AG04450 (cell line): ENCODE measurements at regions of chr4 and their contacts with region 1.

Region 1: DNA sequence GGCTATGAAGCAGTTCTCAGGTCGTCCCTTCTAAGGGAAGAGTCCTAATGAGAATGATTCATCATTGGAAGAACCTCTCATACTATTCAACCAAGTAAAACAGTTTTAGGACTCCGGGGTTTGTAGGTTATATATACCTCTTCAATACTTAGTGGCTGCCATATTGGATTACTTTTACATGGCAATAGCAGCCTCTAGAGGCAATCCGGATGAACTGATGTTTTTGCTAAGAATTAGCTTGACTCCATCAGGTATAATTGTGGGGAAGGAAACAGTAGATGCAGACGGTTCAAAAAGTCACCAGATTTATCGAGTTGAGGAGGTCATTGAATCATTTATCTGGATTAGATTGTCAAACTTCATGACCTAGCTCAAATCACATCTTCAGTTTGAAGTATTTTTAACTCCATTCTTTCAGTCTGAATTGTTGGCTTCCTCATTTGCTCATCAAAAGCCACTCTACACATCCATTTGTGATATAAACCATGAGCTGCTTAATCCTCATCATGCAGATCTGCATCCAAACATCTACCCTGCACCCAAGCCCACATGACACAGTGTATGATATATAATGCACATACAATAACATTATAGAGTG is 28.4 kb downstream of the GUCY1B1 start:
- DNase-seq: no peak
- H3K4me3 ChIP-seq: no peak overlapping the region
- H3K27ac ChIP-seq: no peak overlapping the region
- H3K27me3 ChIP-seq: no peaks in the 10 kb centered on the region
- CTCF ChIP-seq: peak; percentile 91

Region 2: DNA sequence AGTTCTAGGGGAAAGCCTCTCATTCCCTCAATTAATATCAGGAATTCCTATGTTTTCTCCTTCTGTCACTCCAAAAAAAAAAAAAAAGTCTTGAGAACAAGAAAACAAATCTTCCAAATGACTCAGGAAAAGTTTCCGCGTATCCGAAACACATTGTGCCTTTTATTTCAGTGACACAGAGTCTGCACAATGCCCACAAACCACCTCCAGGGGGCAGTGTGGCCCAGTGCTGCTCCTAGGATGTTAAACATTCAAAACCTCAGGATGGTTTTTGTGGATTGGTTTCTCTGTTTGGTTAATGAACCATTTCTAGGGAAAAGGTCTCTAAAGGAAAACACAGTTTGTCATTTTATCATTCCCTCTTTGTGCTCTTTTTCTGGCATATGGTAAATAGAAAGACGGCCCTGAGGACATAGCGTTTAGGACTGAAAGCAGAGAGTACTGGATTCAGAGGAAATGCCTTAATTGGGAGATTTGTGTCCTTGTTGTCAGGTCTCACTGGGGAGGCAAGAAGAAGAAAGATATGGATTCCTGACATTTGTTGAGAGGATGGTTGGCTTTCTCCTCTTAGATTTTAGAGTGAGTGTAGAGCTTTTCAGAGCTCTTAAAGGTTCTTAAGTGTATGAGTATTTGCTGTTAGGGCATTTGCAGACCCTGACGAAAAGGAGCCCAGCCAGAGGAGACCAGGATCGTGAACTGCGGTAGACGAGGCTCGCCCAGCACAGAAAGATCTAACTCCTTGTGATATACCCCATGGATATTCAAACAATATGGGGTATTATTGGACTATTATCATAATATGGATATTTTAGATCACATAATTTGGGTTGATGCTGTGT is 344.7 kb before region 1 on chr4:
- CTCF ChIA-PET with region 1: interaction called, 32 read pairs
- POLR2A ChIA-PET with region 1: no interaction called
- DNase-seq: no peak
- H3K4me3 ChIP-seq: no peak overlapping the region
- H3K27ac ChIP-seq: no peak overlapping the region
- H3K27me3 ChIP-seq: no peaks in the 10 kb centered on the region
- CTCF ChIP-seq: peak; percentile 99

Region 3: GRCh38 chr4:155529272-155529671 is 257.9 kb before region 1 on chr4:
- CTCF ChIA-PET with region 1: interaction called, 13 read pairs
- POLR2A ChIA-PET with region 1: no interaction called
- DNase-seq: no peak
- H3K4me3 ChIP-seq: no peak overlapping the region
- H3K27ac ChIP-seq: no peak overlapping the region
- H3K27me3 ChIP-seq: no peaks in the 10 kb centered on the region
- CTCF ChIP-seq: peak; percentile 23; the same call in 1 of the 2 replicates

Region 4: DNA sequence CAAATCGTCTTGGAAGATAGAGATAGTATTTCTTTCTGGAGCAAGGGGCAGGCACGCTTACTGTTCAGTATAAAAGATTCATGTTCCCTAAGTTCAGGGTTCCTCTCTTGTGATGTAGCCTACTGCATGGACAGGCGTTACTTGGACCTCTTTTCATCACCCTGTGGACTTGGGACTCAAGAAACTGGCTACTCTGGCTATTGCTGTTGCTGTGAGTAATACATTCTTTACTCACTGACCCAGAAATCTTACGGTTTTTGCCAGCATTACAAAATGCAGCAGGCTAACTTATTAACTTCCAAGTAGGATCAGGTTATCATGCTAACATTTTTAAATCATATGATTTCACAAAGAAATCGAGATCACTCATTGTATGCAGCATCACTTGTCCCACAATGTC is 41.2 kb before region 1 on chr4:
- CTCF ChIA-PET with region 1: no interaction called
- POLR2A ChIA-PET with region 1: no interaction called
- DNase-seq: no peak
- H3K4me3 ChIP-seq: no peak overlapping the region
- H3K27ac ChIP-seq: no peak overlapping the region
- H3K27me3 ChIP-seq: no peaks in the 10 kb centered on the region
- CTCF ChIP-seq: no peak

Region 5: GRCh38 chr4:155769090-155769489 is 18.1 kb before region 1 on chr4:
- CTCF ChIA-PET with region 1: interaction called, 14 read pairs
- POLR2A ChIA-PET with region 1: no interaction called
- DNase-seq: peak; percentile 29
- H3K4me3 ChIP-seq: no peak overlapping the region
- H3K27ac ChIP-seq: no peak overlapping the region
- H3K27me3 ChIP-seq: no peaks in the 10 kb centered on the region
- CTCF ChIP-seq: no peak

Region 6: DNA sequence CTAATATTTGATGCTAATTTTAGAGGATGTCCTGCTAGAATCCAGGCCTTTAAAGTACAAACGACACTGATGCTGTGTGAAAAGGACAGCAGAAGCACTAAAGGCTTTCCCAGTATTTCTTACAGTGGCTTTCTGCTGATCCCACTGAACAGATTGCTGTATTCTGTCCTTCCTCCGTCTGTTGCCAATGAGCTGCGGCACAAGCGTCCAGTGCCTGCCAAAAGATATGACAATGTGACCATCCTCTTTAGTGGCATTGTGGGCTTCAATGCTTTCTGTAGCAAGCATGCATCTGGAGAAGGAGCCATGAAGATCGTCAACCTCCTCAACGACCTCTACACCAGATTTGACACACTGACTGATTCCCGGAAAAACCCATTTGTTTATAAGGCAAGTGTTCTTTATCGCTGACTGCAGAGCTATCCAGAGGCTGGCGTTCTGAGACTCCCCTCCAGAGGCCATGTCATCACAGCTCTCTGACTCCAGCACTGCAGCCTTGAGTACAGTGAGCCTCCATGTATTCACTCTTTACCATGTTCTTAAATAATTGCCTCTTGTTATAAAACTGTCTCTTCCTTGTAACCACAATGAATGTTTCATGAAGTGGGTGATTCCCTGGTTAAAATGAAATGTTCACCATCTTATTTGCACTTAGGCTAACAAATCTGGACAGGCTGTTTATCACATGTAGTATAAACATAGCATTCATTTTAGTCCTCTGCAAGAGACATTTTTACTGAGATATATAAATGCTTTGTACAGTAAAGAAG is 15.2 kb after region 1 on chr4:
- CTCF ChIA-PET with region 1: interaction called, 18 read pairs
- POLR2A ChIA-PET with region 1: interaction called, 3 read pairs
- DNase-seq: no peak
- H3K4me3 ChIP-seq: no peak overlapping the region
- H3K27ac ChIP-seq: peak overlapping the region; percentile 22
- H3K27me3 ChIP-seq: no peaks in the 10 kb centered on the region
- CTCF ChIP-seq: no peak

Region 7: DNA sequence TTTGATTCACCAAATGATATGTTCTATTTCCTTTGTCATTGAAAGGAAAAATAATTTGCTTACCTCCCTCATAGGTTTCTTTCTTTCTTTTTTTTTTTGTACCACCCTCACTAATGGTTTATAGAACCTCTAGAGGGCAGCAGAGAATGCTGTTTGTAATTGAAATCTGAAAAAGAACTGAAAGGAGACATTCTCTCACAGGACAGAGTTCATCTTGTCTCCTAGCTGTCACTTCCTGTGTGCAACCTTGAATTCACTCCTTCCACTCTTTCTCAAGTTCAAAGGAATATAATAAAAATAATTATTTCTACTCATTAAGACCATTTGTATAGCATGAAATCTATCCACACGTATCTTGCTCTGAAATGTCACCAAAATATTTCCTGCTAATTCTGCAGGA is 22.6 kb after region 1 on chr4:
- CTCF ChIA-PET with region 1: interaction called, 11 read pairs
- POLR2A ChIA-PET with region 1: no interaction called
- DNase-seq: peak; percentile 70
- H3K4me3 ChIP-seq: no peak overlapping the region
- H3K27ac ChIP-seq: no peak overlapping the region
- H3K27me3 ChIP-seq: no peaks in the 10 kb centered on the region
- CTCF ChIP-seq: peak; percentile 74